Motor neuron (in vitro differentiated cells): ENCODE measurements at regions of chrX and their contacts with region 1.

Region 1: DNA sequence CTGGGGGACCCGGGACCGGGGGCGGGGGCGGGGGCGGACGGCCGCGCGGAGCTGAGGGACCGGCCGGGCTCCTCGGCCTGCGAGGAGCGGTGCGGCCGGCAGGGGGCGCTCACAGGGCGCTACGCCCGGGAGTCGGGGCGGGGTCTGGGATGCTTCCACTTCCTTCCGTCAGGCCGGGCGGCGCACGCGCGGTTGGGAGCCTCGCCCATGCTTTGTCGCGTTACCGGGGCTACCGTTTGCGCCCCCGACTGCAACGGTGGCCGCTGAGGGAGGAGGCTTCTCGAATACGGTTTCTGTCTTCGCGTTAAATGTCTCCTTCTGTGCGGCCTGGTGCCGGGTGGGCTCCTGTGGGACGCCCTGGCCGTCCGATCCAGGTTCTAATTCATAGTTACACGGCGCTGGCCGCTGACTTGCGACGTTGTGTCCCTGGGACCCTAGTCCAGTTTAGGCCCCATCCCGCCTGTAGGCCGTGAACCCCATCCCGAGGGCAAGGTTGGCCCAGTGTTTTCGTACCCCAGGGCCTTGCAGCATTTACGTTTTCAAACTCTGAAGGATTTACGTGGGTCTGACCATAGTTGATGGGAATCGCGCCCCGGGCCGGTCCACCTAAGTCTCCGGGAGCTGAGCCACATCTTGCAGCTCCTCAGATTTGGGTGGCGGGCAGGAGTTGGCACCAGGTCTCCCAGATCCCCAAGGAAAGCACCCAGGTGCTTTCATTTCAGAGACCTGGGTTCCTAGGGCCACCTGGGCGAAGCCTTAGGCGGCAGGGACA is 549 bp downstream of the MSL3 start:
- ATAC-seq: peak; percentile 59 to 72 (median 64)
- H3K4me3 ChIP-seq: peak overlapping the region; percentile 51 to 82 (median 71)
- H3K27ac ChIP-seq: peak overlapping the region; percentile 90 to 94
- H3K4me1 ChIP-seq: no peaks in the 10 kb centered on the region

Region 2: DNA sequence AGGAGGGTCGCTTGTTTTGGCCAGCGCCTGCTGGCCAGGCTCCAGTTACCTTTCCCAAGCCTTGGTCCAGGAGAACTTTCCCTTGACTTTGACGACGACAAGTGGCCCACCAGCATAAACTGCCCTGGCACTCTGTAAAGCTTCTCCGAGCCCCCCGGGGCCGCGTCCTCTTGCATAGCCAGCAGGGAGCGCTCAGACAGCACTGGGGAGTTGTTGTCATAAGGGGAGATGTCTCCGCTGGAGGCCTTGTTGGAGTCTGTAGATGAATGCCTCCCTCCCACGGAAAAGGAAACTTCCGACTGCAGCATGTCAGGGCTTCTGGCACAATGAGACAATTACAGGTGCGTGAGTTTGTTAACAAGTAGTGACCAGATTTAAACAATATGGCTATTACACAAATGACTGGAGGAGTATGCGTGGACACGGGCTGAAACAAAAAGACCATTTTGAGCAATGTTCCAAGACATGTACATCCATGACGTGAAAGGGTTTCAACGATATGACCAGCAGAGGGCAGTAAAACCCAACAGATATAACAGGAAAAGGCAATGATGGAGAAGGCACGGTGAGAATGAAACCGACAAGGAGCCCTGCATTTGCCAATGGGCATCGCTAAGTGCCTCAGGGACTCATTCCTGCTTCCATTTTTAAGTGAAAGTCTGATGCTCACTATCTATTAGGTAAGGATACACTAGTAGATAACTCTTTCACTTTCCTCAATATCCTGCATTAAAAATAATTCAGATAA is 614.5 kb before region 1 on chrX:
- in situ Hi-C with region 1: loop called in 3 of 9 experiments (anchors 25 kb)
- ATAC-seq: peak in 7 of 8 experiments; percentile 56 to 95 (median 76)
- H3K4me3 ChIP-seq: no peak overlapping the region
- H3K27ac ChIP-seq: no peak overlapping the region
- H3K4me1 ChIP-seq: no peaks in the 10 kb centered on the region

Region 3: GRCh38 chrX:11629593-11630211 is 128.9 kb before region 1 on chrX:
- in situ Hi-C with region 1: no loop called
- ATAC-seq: peak in 2 of 8 experiments; percentile 95 to 99
- H3K4me3 ChIP-seq: no peak overlapping the region
- H3K27ac ChIP-seq: no peak overlapping the region
- H3K4me1 ChIP-seq: no peaks in the 10 kb centered on the region

Region 4: DNA sequence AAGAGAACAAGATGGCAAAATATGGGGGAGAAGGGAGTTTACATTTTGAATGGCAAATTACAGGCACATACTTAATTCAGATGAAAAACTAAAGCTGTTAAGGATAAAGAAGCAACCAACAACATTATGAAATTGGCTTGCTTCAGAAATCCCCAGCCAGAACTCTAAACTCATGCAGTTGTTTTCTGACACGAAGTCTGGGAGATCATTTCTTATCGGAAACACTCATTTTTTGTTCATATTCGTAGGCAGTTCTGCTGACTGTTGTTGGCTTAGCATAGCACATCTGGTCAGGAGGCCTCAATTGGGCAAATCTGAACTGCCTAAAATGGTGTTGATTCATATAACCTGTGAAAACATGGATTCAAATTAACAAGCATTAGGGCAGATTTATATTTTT is 59.9 kb before region 1 on chrX:
- in situ Hi-C with region 1: no loop called
- ATAC-seq: no peak
- H3K4me3 ChIP-seq: no peak overlapping the region
- H3K27ac ChIP-seq: no peak overlapping the region
- H3K4me1 ChIP-seq: no peaks in the 10 kb centered on the region

Region 5: GRCh38 chrX:11867610-11868345 is 109.2 kb after region 1 on chrX:
- in situ Hi-C with region 1: no loop called
- ATAC-seq: no peak
- H3K4me3 ChIP-seq: no peak overlapping the region
- H3K27ac ChIP-seq: no peak overlapping the region
- H3K4me1 ChIP-seq: no peaks in the 10 kb centered on the region

Region 6: GRCh38 chrX:11960031-11960430 is 201.4 kb after region 1 on chrX:
- in situ Hi-C with region 1: no loop called
- ATAC-seq: no peak
- H3K4me3 ChIP-seq: no peak overlapping the region
- H3K27ac ChIP-seq: no peak overlapping the region
- H3K4me1 ChIP-seq: no peaks in the 10 kb centered on the region